OCI-LY7 (cell line): ENCODE measurements at regions of chr6 and their contacts with region 1.

Region 1: GRCh38 chr6:710601-711571 is 17.9 kb upstream of the EXOC2 start:
- DNase-seq: peak; percentile 79
- H3K4me3 ChIP-seq: peak overlapping the region; percentile 67
- H3K27ac ChIP-seq: peak overlapping the region; percentile 82
- H3K4me1 ChIP-seq: peaks cover 36% of the 10 kb centered on the region
- CTCF ChIP-seq: no peak

Region 2: GRCh38 chr6:181049-181654 is 529.7 kb before region 1 on chr6:
- CTCF ChIA-PET with region 1: no interaction called
- POLR2A ChIA-PET with region 1: interaction called, 5 read pairs
- intact Hi-C with region 1: loop called (anchors 2 kb)
- DNase-seq: peak; percentile 70
- H3K4me3 ChIP-seq: peak overlapping the region; percentile 51
- H3K27ac ChIP-seq: peak overlapping the region; percentile 88
- H3K4me1 ChIP-seq: peaks cover 60% of the 10 kb centered on the region
- CTCF ChIP-seq: no peak

Region 3: GRCh38 chr6:356828-357251 is 354.0 kb before region 1 on chr6:
- CTCF ChIA-PET with region 1: no interaction called
- POLR2A ChIA-PET with region 1: no interaction called
- intact Hi-C with region 1: no loop called
- DNase-seq: peak; percentile 83
- H3K4me3 ChIP-seq: peak overlapping the region; percentile 10
- H3K27ac ChIP-seq: peak overlapping the region; percentile 86
- H3K4me1 ChIP-seq: peaks cover 100% of the 10 kb centered on the region
- CTCF ChIP-seq: no peak

Region 4: GRCh38 chr6:692855-693722 is 17.8 kb before region 1 on chr6 and contains the start of gene EXOC2:
- CTCF ChIA-PET with region 1: no interaction called
- POLR2A ChIA-PET with region 1: interaction called, 7 read pairs
- intact Hi-C with region 1: loop called (anchors 1 kb)
- DNase-seq: peak; percentile 91
- H3K4me3 ChIP-seq: peak within 1 kb of the TSS; percentile 78
- H3K27ac ChIP-seq: peak within 1 kb of the TSS; percentile 42
- H3K4me1 ChIP-seq: peaks cover 12% of the 10 kb centered on the region
- CTCF ChIP-seq: peak; percentile 55
- total RNA-seq, gene EXOC2: 16.5 and 22.5 TPM in 2 replicates

Region 5: DNA sequence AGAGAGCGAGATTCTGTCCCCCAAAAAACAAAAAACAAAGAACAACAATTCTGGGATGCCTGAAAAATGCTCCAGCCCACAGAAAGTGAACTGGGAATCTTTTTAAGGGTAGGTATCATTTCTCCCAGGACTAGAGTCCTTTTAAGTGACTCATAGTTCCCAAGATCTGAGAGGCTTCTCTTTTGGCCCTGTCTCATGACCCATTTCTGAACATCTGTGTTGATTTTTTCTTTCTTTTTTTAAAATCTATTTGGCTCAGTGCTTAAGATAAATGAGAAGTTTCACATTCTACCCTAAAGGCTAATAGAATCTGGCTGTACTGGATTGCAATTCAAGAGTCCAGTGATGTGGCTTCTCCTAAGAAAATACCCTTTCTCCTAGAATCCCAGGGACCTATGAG is 383.4 kb after region 1 on chr6:
- CTCF ChIA-PET with region 1: no interaction called
- POLR2A ChIA-PET with region 1: no interaction called
- intact Hi-C with region 1: no loop called
- DNase-seq: no peak
- H3K4me3 ChIP-seq: no peak overlapping the region
- H3K27ac ChIP-seq: no peak overlapping the region
- H3K4me1 ChIP-seq: no peaks in the 10 kb centered on the region
- CTCF ChIP-seq: no peak